ENCODE measurements at regions of chr12 and their contacts with region 1.

Region 1: GRCh38 chr12:70507442-70507841 is 129.8 kb downstream of the PTPRB start:
- DNase-seq: no peak
- ATAC-seq: no peak
- H3K4me3 ChIP-seq: no peak overlapping the region
- H3K4me3 Mint-ChIP-seq: no peak overlapping the region
- H3K27ac ChIP-seq: no peak overlapping the region
- H3K27ac Mint-ChIP-seq: no peak overlapping the region
- H3K4me1 ChIP-seq: no peaks in the 10 kb centered on the region
- H3K4me1 Mint-ChIP-seq: no peaks in the 10 kb centered on the region
- H3K27me3 ChIP-seq: no peaks in the 10 kb centered on the region
- H3K27me3 Mint-ChIP-seq: peaks cover 0 to 17% (median 11%) of the 10 kb centered on the region in 5 donors

Region 2: DNA sequence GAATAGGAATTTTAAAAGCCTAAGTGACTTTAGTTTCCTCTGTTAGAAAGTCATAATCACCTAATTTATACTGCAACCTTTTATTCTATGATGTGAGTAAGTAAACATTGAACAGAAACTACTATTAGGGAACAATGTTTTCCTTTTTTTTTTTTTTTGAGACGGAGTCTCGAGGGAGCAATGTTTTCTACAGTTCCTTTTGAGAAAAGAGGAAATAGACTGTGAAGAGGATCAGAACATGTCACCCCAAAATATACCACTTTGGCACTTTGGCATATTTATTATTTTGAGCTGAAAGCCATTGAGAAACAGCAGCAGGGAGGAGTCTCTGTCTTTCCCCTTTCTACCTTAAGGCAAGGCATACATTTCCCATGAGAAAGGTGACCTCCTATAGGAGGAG is 426.9 kb before region 1 on chr12:
- CTCF ChIA-PET with region 1: no interaction called
- POLR2A ChIA-PET with region 1: no interaction called
- intact Hi-C with region 1: no loop called
- DNase-seq: no peak
- ATAC-seq: no peak
- H3K4me3 ChIP-seq: no peak overlapping the region
- H3K4me3 Mint-ChIP-seq: no peak overlapping the region
- H3K27ac ChIP-seq: no peak overlapping the region
- H3K27ac Mint-ChIP-seq: no peak overlapping the region
- H3K4me1 ChIP-seq: no peaks in the 10 kb centered on the region
- H3K4me1 Mint-ChIP-seq: peaks cover 0 to 2% (median 0%) of the 10 kb centered on the region in 7 donors
- H3K27me3 ChIP-seq: no peaks in the 10 kb centered on the region
- H3K27me3 Mint-ChIP-seq: peaks cover 0 to 9% (median 0%) of the 10 kb centered on the region in 5 donors

Region 3: DNA sequence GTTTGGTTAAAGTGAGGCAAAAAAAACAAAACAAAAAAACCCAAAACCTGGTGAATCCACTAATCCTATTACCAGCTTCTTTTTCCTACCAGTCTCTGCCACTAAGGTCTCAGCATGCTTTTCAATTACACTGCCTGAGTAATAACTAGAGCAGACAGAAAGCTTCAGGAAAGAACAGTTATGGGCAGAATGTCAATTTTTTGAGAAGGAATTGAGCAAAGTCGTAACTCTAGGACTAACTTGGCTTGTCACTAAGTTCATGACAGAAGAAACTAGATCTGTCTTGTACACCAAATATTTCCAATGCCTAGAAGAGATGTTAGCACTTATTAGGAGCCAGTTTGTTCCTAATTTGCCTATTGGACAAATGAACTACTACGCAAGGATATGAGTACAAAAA is 413.0 kb before region 1 on chr12:
- CTCF ChIA-PET with region 1: no interaction called
- POLR2A ChIA-PET with region 1: no interaction called
- intact Hi-C with region 1: loop called in 1 of 2 experiments (anchors 5 kb)
- DNase-seq: no peak
- ATAC-seq: no peak
- H3K4me3 ChIP-seq: no peak overlapping the region
- H3K4me3 Mint-ChIP-seq: no peak overlapping the region
- H3K27ac ChIP-seq: no peak overlapping the region
- H3K27ac Mint-ChIP-seq: no peak overlapping the region
- H3K4me1 ChIP-seq: no peaks in the 10 kb centered on the region
- H3K4me1 Mint-ChIP-seq: no peaks in the 10 kb centered on the region
- H3K27me3 ChIP-seq: no peaks in the 10 kb centered on the region
- H3K27me3 Mint-ChIP-seq: peaks cover 0 to 4% (median 0%) of the 10 kb centered on the region in 5 donors

Region 4: DNA sequence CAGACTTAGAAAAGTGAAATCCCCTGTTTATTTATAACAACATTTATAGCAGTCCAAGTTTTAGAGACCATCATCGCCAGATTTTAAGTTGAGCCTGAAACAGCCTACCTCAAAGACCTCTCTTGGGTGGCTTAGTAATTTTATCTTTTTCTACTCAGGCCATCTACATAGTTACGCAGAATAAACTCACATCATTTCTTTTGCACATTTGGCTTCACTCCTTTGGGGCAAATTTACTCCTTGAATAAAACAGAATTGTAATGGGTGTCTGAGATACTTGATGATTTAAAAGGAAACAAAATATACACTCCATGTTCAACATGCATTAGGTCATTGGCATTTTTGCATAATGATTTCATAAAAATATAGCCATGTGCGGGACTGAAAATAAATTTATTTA is 755.0 kb after region 1 on chr12:
- CTCF ChIA-PET with region 1: no interaction called
- POLR2A ChIA-PET with region 1: no interaction called
- intact Hi-C with region 1: no loop called
- DNase-seq: no peak
- ATAC-seq: no peak
- H3K4me3 ChIP-seq: no peak overlapping the region
- H3K4me3 Mint-ChIP-seq: no peak overlapping the region
- H3K27ac ChIP-seq: no peak overlapping the region
- H3K27ac Mint-ChIP-seq: no peak overlapping the region
- H3K4me1 ChIP-seq: no peaks in the 10 kb centered on the region
- H3K4me1 Mint-ChIP-seq: no peaks in the 10 kb centered on the region
- H3K27me3 ChIP-seq: no peaks in the 10 kb centered on the region
- H3K27me3 Mint-ChIP-seq: peaks cover 0 to 4% (median 0%) of the 10 kb centered on the region in 5 donors

Measured in naive thymus-derived CD4-positive, alpha-beta T cell (primary cell).